Activated naive CD8-positive, alpha-beta T cell treated with anti-CD3 and anti-CD28 coated beads, Interleukin-2, amount 10 ng/mL, durations not matched to agents 7 days and 5 days (primary cell): ENCODE measurements at regions of chr16 and their contacts with region 1.

Region 1: DNA sequence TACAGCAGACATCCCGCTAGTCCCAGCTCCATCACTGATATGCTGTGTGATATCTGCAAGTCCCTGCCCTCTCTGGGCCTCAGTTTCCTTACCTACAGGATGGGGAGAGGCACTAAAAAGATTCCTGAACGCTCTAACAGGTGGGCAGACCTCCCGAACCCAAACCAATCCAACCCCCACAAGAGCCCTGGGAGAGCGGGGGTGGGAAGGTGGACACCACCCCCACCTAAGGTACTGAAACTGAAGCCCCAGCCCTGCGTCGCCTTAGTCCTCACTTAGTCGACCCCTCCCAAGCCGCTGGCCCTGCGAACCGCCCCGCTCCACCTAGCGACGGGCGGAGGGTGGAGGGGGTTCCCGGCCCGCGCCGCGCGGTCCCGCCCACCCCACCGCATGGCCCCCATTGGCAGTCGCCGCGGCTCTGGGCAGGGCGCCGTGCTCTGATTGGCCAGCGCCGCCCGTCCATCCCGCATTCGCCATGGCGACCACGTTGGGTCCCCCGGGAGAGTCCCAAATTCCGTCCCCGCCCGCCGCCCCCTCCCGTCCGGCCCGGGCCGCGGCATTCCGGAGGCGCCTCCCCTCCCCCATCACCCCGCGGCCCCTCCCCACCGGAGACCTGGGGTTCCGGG is 578 bp downstream of the CCDC102A start:
- DNase-seq: peak; percentile 92
- ATAC-seq: peak; percentile 87
- H3K4me3 Mint-ChIP-seq: peak overlapping the region; percentile 90
- H3K27ac Mint-ChIP-seq: peak overlapping the region; percentile 87
- H3K4me1 Mint-ChIP-seq: peaks cover 69% of the 10 kb centered on the region
- H3K27me3 Mint-ChIP-seq: no peaks in the 10 kb centered on the region

Region 2: DNA sequence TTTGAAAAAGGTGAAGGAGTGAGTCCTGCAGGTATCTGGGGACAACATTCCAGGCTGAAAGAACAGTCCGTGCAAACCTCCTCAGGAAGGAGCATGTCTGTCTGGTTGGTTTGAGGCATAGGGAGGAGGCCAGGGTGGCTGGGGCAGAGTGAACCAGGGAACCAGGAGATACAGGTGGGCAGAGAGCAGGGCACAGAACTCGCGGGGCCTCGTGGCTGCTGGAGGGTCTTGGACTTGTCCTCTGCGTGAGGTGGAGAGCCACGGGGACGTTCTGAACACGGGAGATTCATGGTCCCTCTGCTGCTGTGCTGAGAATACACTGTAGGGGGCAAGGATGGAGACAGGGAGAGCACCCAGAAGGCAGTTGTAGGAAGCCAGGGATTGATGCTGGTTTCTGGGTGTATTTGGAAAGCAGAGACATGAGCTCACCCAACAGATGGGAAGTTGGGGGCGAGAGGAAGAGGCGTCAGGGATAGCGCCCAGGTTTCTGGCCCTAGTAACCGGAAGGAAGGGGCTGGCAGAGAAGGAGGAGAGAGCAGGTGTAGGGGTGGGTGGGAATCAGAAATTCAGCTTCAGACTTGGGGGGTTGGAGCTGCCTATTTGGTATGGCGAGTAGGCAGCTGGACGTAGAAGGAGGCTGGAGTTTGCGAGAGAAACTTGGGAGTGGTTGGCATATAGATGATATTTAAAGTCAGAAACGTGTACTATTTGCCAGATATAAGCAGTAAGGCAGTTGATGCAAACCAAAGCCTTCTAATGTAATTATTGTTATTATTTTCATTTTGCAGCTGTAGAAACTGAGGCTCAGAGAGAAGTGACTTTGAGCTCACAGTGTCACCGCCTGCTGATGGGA is 131.6 kb before region 1 on chr16 and contains the start of gene CCL17:
- POLR2A ChIA-PET with region 1: no interaction called
- DNase-seq: no peak
- ATAC-seq: peak; percentile 45
- H3K4me3 Mint-ChIP-seq: no peak within 1 kb of the TSS
- H3K27ac Mint-ChIP-seq: no peak within 1 kb of the TSS
- H3K4me1 Mint-ChIP-seq: peaks cover 2% of the 10 kb centered on the region
- H3K27me3 Mint-ChIP-seq: peaks cover 1% of the 10 kb centered on the region
- total RNA-seq, gene CCL17: not detected

Region 3: DNA sequence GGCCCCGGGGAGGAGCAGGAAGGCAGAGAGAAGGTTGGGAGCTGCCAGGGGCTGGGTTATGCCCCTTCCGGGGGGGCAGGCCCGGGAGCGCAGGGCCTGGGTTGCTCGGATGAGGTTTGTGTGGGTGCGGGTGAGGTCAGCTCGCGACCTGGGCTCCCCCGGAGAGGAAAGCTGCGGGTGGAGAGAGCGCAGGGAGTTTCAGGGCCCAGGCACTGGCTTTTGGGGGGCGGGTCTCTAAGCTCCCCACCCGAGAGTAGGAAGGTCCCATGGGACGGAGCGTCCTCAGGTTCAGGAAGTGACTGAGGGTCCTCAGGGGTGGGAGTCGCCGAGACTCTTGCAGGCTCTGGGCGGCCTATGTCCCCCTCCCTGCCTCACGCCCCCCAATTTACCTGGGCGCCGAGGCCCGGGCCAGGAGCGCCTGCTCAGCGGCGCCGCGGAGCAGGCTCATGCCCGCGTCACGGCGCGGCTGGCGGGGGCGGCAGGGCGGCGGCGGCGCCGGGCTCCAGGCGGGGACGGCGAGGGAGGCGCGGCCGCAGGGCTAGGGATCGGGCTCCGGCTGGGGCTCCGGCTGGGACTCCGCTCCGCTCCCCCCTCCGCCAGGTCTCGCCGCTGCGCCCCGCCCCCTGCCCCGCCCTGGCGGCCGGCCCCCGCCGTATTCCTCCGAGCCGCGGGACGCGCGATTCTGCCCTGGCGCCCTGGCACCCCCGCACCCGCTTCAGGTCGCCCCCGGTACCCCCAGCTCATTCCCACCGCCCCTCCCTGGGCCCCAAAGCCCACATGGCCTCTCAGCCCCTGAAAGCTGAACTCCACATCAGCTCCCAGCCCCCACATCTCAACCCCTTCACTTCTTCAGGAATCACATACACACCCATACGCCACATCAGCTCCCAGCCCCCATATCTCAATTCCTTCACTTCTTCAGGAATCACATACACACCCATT is 49.6 kb before region 1 on chr16 and contains the start of gene DOK4:
- POLR2A ChIA-PET with region 1: interaction called, 10 read pairs
- DNase-seq: peak; percentile 89
- ATAC-seq: peak; percentile 92
- H3K4me3 Mint-ChIP-seq: peak within 1 kb of the TSS; percentile 87
- H3K27ac Mint-ChIP-seq: peak within 1 kb of the TSS; percentile 82
- H3K4me1 Mint-ChIP-seq: peaks cover 13% of the 10 kb centered on the region
- H3K27me3 Mint-ChIP-seq: peaks cover 6% of the 10 kb centered on the region
- total RNA-seq, gene DOK4: 6.3 to 6.4 TPM

Region 4: GRCh38 chr16:57555831-57556230 is 20.0 kb after region 1 on chr16:
- POLR2A ChIA-PET with region 1: no interaction called
- DNase-seq: no peak
- ATAC-seq: no peak
- H3K4me3 Mint-ChIP-seq: no peak overlapping the region
- H3K27ac Mint-ChIP-seq: no peak overlapping the region
- H3K4me1 Mint-ChIP-seq: peaks cover 19% of the 10 kb centered on the region
- H3K27me3 Mint-ChIP-seq: no peaks in the 10 kb centered on the region